Prostate gland (tissue), 2 donors: ENCODE measurements at regions of chr3 and their contacts with region 1.

Region 1: GRCh38 chr3:31768479-31769123 is 212.5 kb downstream of the OSBPL10 start:
- DNase-seq: peak; percentile 50
- H3K4me3 ChIP-seq: no peak overlapping the region
- H3K27ac ChIP-seq: no peak overlapping the region
- H3K4me1 ChIP-seq: no peaks in the 10 kb centered on the region
- H3K27me3 ChIP-seq: no peaks in the 10 kb centered on the region
- CTCF ChIP-seq: peak in 3 of 4 experiments; percentile 51 to 66 (median 60)
- POLR2A ChIP-seq: no peak

Region 2: DNA sequence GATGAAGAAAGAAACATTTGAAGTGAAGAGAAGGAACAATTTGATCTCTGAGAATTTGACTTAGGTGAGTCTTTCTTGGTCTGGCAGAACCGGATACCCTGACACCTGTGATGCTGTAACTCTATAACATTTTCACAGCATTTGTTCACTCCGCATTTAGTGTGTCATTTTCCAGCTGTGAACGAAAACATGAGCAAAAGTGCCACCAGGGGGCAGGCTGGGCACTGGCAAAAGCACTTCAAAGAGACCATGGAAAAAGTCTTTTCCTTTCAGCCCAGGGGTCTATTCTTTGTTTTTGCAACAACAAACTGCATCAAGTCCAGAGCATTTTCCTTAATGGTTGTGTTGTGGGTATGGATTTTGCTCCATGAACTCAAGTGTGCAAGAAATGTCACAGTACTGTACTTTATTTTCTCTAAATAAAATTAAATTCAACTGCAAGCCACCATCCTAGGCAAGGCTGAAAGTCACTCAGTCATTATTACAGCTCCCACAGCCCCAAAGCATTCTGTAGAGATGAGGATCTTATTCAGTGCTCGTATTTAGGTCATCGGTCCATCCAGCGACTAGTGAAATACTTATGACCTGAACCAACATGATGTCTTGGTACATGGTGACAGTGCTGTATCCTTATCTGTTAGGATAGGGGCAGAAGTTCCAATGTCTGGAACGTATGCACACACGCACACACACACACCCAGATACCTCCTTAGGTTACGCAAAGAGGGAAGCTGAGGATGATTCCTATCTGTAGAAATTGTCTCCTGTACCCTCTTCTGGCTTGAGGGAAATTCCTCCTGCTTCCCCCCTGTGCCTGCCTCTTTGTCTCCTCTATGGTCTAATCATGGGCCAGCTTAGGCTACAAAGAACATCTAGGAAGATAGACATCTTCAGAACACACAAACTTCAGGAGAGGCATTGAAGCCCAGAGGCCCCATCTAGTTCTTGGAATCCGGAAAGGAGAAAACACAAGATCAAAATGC is 999.6 kb before region 1 on chr3:
- intact Hi-C with region 1: loop called (anchors 10 kb)
- DNase-seq: peak; percentile 47
- H3K4me3 ChIP-seq: no peak overlapping the region
- H3K27ac ChIP-seq: no peak overlapping the region
- H3K4me1 ChIP-seq: no peaks in the 10 kb centered on the region
- H3K27me3 ChIP-seq: no peaks in the 10 kb centered on the region
- CTCF ChIP-seq: peak; percentile 39 to 72 (median 64)
- POLR2A ChIP-seq: no peak

Region 3: GRCh38 chr3:31531992-31532586 is 236.5 kb before region 1 on chr3:
- intact Hi-C with region 1: loop called (anchors 10 kb)
- DNase-seq: peak; percentile 99
- H3K4me3 ChIP-seq: peak overlapping the region; percentile 88 to 89
- H3K27ac ChIP-seq: peak overlapping the region; percentile 91 to 96
- H3K4me1 ChIP-seq: peaks cover 9% of the 10 kb centered on the region
- H3K27me3 ChIP-seq: no peaks in the 10 kb centered on the region
- CTCF ChIP-seq: peak; percentile 7 to 60 (median 26)
- POLR2A ChIP-seq: no peak

Region 4: DNA sequence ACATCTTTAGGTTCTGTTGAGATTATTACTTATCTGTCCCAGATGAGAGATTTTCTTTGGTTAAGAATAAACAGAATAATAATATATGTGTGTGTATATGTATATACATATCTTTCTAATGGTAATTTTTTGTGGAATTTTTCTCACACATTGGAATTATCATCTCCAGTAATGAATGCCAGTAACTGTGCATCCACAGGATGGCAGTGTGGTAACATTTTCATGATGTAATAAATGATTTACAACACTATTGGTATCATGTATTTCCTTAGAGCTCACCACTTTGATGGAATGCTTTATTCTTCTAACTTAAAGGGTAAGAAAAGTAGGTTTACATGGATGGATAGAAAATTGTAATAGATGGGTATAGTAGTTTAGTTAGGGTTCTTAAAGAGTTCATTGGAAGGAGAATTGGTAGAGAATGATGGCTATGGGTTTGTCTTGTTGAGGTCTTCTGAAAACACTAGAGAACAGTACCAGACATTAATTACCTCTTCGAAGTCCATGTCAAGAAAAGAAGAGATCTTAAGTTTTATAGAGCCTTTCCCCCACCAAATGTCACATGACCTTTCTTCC is 157.8 kb before region 1 on chr3:
- intact Hi-C with region 1: loop called (anchors 10 kb)
- DNase-seq: peak; percentile 13
- H3K4me3 ChIP-seq: no peak overlapping the region
- H3K27ac ChIP-seq: no peak overlapping the region
- H3K4me1 ChIP-seq: no peaks in the 10 kb centered on the region
- H3K27me3 ChIP-seq: no peaks in the 10 kb centered on the region
- CTCF ChIP-seq: peak in 3 of 4 experiments; percentile 43 to 71 (median 70)
- POLR2A ChIP-seq: no peak

Region 5: DNA sequence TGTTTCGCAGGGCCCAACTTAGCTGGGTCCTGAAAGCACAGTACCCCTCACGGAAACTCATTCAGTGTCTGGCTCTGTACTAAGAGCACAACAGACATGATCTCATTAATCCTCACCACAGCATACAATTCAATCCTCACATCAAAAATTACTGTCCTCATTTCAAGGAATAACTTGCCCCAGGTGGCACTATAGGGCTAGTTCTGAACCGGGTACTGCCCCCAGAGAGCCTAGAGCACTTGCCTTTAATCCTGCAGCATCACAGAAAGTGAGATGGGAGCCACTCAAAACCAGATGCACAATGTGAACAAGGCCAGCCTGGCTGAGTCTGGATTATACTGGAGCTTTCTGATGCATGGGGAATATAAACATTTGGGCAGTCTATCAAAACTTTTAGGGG is 89.8 kb after region 1 on chr3:
- intact Hi-C with region 1: no loop called
- DNase-seq: no peak
- H3K4me3 ChIP-seq: no peak overlapping the region
- H3K27ac ChIP-seq: no peak overlapping the region
- H3K4me1 ChIP-seq: no peaks in the 10 kb centered on the region
- H3K27me3 ChIP-seq: no peaks in the 10 kb centered on the region
- CTCF ChIP-seq: no peak
- POLR2A ChIP-seq: no peak